Endothelial cell of umbilical vein (primary cell): ENCODE measurements at regions of chr14 and their contacts with region 1.

Region 1: GRCh38 chr14:67674481-67675169 is at the start of gene VTI1B:
- DNase-seq: peak; percentile 88
- H3K4me3 ChIP-seq: peak within 1 kb of the TSS; percentile 88 to 99 (median 97)
- H3K27ac ChIP-seq: peak within 1 kb of the TSS; percentile 83
- H3K4me1 ChIP-seq: peaks cover 18% of the 10 kb centered on the region
- H3K27me3 ChIP-seq: no peaks in the 10 kb centered on the region
- CTCF ChIP-seq: no peak
- POLR2A ChIP-seq: peak; percentile 69
- total RNA-seq, gene VTI1B: 79.4 and 90.0 TPM in 2 replicates

Region 2: DNA sequence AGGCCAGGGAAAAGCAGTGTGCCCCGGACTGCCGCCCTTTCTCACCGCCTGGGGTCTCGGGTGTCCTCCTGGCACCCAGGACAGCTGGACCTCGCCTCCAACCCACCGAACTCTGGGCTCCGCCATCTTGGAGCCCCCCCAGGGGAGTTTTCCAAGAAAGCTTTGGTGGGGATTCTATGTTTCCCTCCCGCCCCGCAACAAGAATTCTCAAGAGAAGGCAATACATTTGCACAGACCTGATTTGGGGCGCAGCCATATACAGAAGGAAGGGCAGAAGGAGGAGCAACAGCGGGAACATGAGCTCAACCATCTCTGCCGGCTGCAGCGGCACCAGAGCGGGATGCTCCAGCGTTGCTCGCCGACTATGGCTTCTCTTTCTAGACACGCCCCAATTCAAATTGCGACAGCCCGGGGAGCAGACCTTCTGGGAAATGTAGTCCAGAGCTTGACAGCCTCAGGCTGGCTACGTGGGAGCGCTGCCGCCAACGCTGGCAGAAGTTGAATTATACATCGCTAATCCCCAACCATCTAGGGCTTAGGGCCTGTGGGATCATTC is 20.8 kb after region 1 on chr14 and contains the start of gene RDH11:
- CTCF ChIA-PET with region 1: interaction called, 181 read pairs
- POLR2A ChIA-PET with region 1: no interaction called
- dilution Hi-C with region 1: no loop called
- intact Hi-C with region 1: loop called (anchors 1 kb)
- DNase-seq: peak; percentile 89
- H3K4me3 ChIP-seq: peak within 1 kb of the TSS; percentile 77 to 87 (median 78)
- H3K27ac ChIP-seq: peak within 1 kb of the TSS; percentile 61
- H3K4me1 ChIP-seq: peaks cover 10% of the 10 kb centered on the region
- H3K27me3 ChIP-seq: no peaks in the 10 kb centered on the region
- CTCF ChIP-seq: no peak
- POLR2A ChIP-seq: peak; percentile 94
- total RNA-seq, gene RDH11: 79.8 and 90.2 TPM in 2 replicates